Caco-2 (cell line): ENCODE measurements at regions of chr1 and their contacts with region 1.

Region 1: DNA sequence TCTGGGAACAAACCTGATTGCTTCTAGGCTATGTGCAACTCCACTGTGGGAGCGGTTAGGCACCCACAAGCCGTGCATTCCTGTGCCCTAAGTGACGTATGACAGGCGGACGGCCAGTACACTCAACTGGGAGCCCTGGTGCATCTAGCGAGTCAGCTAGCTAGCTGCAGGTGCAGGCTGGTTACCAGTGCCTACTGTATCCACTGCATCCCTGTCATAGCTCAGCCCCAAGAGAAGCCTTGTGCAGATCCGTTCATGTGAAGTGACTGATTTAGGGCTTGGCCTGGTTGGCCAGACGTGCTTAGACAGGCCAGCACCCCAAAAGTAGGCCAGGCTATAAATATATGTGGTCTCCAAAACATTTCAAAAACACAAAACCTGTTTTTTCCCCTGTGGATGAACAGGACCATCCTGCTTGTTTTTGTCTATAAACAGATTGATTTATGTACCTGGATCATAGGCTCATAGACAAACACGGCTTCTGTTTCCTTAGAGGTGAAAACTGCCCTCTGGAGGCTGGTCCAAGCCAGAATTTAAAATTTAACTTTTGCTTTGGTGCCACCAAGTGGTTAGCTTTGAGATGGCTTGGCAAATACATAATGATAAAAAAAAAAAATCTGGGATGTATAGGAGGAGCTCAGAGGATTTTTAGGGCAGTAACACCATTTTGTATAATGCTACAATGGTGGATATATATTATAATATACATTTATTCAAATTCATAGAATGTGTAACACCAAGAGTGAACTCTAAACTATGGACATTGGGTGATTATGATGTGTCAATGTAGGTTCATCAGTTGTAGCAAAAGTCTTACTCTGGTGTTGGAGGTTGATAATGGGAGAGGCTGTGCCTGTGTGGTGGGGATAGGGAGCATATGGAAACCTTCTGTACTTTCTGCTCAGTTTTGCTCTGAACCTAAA is 68.5 kb downstream of the GIPC2 start:
- DNase-seq: peak; percentile 41 to 68
- H3K4me3 ChIP-seq: no peak overlapping the region
- H3K4me3 Mint-ChIP-seq: no peak overlapping the region
- H3K27ac Mint-ChIP-seq: no peak overlapping the region
- H3K4me1 ChIP-seq: no peaks in the 10 kb centered on the region
- H3K4me1 Mint-ChIP-seq: no peaks in the 10 kb centered on the region
- H3K27me3 ChIP-seq: no peaks in the 10 kb centered on the region
- H3K27me3 Mint-ChIP-seq: no peaks in the 10 kb centered on the region
- CTCF ChIP-seq: peak; percentile 59 to 74

Region 2: GRCh38 chr1:77732090-77732489 is 382.2 kb before region 1 on chr1:
- CTCF ChIA-PET with region 1: no interaction called
- POLR2A ChIA-PET with region 1: no interaction called
- intact Hi-C with region 1: loop called (anchors 5 kb)
- DNase-seq: no peak
- H3K4me3 ChIP-seq: no peak overlapping the region
- H3K4me3 Mint-ChIP-seq: no peak overlapping the region
- H3K27ac Mint-ChIP-seq: no peak overlapping the region
- H3K4me1 ChIP-seq: no peaks in the 10 kb centered on the region
- H3K4me1 Mint-ChIP-seq: no peaks in the 10 kb centered on the region
- H3K27me3 ChIP-seq: no peaks in the 10 kb centered on the region
- H3K27me3 Mint-ChIP-seq: no peaks in the 10 kb centered on the region
- CTCF ChIP-seq: no peak

Region 3: DNA sequence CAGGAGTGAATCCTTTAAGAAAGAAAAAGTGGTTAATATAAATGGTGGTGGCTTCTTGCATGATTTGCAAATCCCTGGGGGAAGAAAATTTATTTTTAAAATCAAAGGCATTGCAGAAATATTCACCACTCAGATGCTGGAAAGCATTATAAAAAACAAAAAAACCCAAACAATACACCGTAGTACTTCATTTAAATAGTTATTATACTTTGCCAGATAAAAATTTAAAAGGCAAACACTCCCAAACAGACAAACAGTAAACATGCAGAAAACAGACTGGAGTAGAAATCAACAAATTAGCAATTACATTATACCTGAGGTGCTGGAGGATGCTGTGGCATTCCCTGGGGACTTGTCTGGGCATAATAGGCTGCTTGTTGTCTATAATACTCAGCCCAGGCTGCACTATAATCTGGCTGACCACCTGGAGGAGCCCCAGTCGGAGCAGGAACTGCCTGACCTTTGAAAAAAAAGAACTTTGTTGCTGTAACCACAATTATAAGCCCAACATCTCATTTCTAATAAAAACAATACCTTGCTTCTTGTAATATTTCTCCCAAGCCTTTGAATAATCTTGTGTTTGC is 165.4 kb before region 1 on chr1:
- CTCF ChIA-PET with region 1: no interaction called
- POLR2A ChIA-PET with region 1: no interaction called
- intact Hi-C with region 1: loop called (anchors 1 kb)
- DNase-seq: peak in 1 of 2 experiments; percentile 7
- H3K4me3 ChIP-seq: no peak overlapping the region
- H3K4me3 Mint-ChIP-seq: no peak overlapping the region
- H3K27ac Mint-ChIP-seq: no peak overlapping the region
- H3K4me1 ChIP-seq: no peaks in the 10 kb centered on the region
- H3K4me1 Mint-ChIP-seq: no peaks in the 10 kb centered on the region
- H3K27me3 ChIP-seq: no peaks in the 10 kb centered on the region
- H3K27me3 Mint-ChIP-seq: no peaks in the 10 kb centered on the region
- CTCF ChIP-seq: no peak

Region 4: GRCh38 chr1:77978969-77979876 is 135.1 kb before region 1 on chr1 and contains the start of gene FUBP1:
- CTCF ChIA-PET with region 1: interaction called, 6 read pairs
- POLR2A ChIA-PET with region 1: no interaction called
- intact Hi-C with region 1: loop called (anchors 1 kb)
- DNase-seq: peak; percentile 91 to 95
- H3K4me3 ChIP-seq: peak within 1 kb of the TSS; percentile 89
- H3K4me3 Mint-ChIP-seq: no peak within 1 kb of the TSS
- H3K27ac Mint-ChIP-seq: no peak within 1 kb of the TSS
- H3K4me1 ChIP-seq: peaks cover 24% of the 10 kb centered on the region
- H3K4me1 Mint-ChIP-seq: no peaks in the 10 kb centered on the region
- H3K27me3 ChIP-seq: no peaks in the 10 kb centered on the region
- H3K27me3 Mint-ChIP-seq: no peaks in the 10 kb centered on the region
- CTCF ChIP-seq: peak; percentile 35 to 66
- total RNA-seq, gene FUBP1: 90.1 and 92.6 TPM in 2 replicates

Region 5: DNA sequence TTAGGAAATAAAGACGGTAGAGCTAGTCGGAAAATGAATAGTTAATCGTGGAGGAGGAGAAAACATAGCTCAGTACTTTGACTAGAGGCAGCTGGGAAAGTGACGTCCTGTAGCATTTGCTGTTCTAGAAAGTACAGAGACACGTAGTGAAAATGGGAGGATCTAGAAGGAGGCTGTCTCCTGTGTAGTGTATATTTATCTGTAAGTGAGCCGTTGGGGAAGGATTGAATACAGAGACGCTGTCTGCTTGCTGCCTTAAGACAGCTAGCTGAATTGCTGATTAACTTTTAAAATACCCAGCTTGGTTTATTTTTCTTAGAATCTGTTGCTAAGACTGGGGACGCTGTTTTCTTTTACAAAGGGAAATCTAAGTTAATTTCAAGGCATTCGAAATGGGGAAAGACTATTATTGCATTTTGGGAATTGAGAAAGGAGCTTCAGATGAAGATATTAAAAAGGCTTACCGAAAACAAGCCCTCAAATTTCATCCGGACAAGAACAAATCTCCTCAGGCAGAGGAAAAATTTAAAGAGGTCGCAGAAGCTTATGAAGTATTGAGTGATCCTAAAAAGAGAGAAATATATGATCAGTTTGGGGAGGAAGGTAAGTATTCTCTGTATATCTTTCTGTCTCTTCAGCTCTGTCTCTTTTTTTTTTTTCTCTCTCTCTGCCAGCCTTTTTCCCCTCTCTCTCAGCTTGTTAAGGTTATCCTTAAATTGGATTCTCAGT is 109.4 kb before region 1 on chr1 and contains the start of gene DNAJB4:
- CTCF ChIA-PET with region 1: interaction called, 14 read pairs
- POLR2A ChIA-PET with region 1: interaction called, 3 read pairs
- intact Hi-C with region 1: loop called (anchors 1 kb)
- DNase-seq: peak; percentile 69 to 80
- H3K4me3 ChIP-seq: peak within 1 kb of the TSS; percentile 32
- H3K4me3 Mint-ChIP-seq: peak within 1 kb of the TSS; percentile 79
- H3K27ac Mint-ChIP-seq: peak within 1 kb of the TSS; percentile 90
- H3K4me1 ChIP-seq: no peaks in the 10 kb centered on the region
- H3K4me1 Mint-ChIP-seq: no peaks in the 10 kb centered on the region
- H3K27me3 ChIP-seq: no peaks in the 10 kb centered on the region
- H3K27me3 Mint-ChIP-seq: no peaks in the 10 kb centered on the region
- CTCF ChIP-seq: no peak
- total RNA-seq, gene DNAJB4: 5.4 and 6.5 TPM in 2 replicates

Region 6: DNA sequence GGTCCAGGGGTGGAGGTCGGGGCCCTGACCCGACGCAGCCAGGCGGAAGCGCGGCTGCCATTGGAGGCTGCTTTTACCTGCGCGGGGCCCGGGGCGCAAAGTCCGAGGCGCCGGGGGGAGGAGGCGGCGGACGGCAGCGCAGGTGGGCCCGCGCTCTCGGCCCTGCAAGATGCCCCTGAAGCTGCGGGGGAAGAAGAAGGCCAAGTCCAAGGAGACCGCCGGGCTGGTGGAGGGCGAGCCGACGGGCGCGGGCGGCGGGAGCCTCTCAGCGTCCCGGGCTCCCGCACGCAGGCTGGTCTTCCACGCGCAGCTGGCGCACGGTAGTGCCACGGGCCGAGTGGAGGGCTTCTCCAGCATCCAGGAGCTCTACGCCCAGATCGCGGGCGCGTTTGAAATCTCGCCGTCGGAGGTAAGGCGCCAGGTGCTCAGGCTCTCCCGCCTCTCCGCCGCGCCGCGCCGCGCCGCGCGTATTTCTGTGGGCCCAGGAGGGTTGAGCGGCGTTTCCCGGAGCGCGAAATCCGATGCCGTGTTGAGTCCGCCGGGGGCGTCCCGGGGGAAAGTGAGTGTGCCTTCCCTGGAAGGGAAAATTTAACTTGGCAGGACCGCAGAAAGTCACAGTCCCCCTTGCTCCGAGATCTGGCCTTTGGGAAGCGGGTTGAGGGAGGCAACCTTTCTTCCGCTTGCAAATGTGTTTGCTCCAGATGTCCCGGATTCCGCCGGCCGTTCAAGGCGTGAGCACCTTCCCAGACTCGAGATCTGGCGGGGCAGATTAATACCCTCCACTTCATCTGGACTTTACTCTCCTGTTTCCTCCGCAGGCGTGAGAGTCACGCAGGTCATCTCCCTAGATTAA is 68.1 kb before region 1 on chr1 and contains the start of gene GIPC2:
- CTCF ChIA-PET with region 1: no interaction called
- POLR2A ChIA-PET with region 1: no interaction called
- intact Hi-C with region 1: loop called (anchors 2 kb)
- DNase-seq: peak; percentile 58 to 62
- H3K4me3 ChIP-seq: peak within 1 kb of the TSS; percentile 82
- H3K4me3 Mint-ChIP-seq: peak within 1 kb of the TSS; percentile 77
- H3K27ac Mint-ChIP-seq: peak within 1 kb of the TSS; percentile 70
- H3K4me1 ChIP-seq: 0 out of 2 replicates have a peak, but pooled peaks cover 3% of the 10 kb centered on the region
- H3K4me1 Mint-ChIP-seq: peaks cover 7% of the 10 kb centered on the region
- H3K27me3 ChIP-seq: no peaks in the 10 kb centered on the region
- H3K27me3 Mint-ChIP-seq: no peaks in the 10 kb centered on the region
- CTCF ChIP-seq: peak in 1 of 2 experiments; percentile 6
- total RNA-seq, gene GIPC2: 4.3 and 4.4 TPM in 2 replicates

Region 7: GRCh38 chr1:78068681-78069283 is 45.5 kb before region 1 on chr1:
- CTCF ChIA-PET with region 1: no interaction called
- POLR2A ChIA-PET with region 1: no interaction called
- intact Hi-C with region 1: loop called (anchors 5 kb)
- DNase-seq: no peak
- H3K4me3 ChIP-seq: no peak overlapping the region
- H3K4me3 Mint-ChIP-seq: no peak overlapping the region
- H3K27ac Mint-ChIP-seq: no peak overlapping the region
- H3K4me1 ChIP-seq: no peaks in the 10 kb centered on the region
- H3K4me1 Mint-ChIP-seq: no peaks in the 10 kb centered on the region
- H3K27me3 ChIP-seq: no peaks in the 10 kb centered on the region
- H3K27me3 Mint-ChIP-seq: peaks cover 2% of the 10 kb centered on the region
- CTCF ChIP-seq: no peak

Region 8: DNA sequence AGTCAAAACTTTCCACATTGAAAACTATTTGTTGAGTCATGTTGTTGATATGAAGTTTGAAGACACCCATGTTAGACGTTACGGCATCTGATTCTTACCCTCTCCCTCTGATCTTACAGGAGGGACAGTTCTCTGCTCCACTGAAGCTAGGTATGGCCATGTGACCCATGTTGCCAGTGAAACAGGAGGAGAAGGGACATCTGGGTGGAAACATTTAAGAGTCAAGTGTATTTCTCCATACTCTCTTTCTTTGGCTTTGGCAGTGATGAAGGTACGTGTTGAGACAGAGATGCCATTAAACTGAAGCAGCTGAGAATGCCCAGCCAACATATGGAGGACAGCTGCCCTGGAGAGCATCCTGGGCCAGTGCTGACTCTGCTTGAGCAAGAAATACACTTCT is 178.1 kb after region 1 on chr1:
- CTCF ChIA-PET with region 1: no interaction called
- POLR2A ChIA-PET with region 1: no interaction called
- intact Hi-C with region 1: no loop called
- DNase-seq: no peak
- H3K4me3 ChIP-seq: no peak overlapping the region
- H3K4me3 Mint-ChIP-seq: no peak overlapping the region
- H3K27ac Mint-ChIP-seq: no peak overlapping the region
- H3K4me1 ChIP-seq: no peaks in the 10 kb centered on the region
- H3K4me1 Mint-ChIP-seq: no peaks in the 10 kb centered on the region
- H3K27me3 ChIP-seq: no peaks in the 10 kb centered on the region
- H3K27me3 Mint-ChIP-seq: peaks cover 10% of the 10 kb centered on the region
- CTCF ChIP-seq: no peak